Activated naive CD4-positive, alpha-beta T cell treated with anti-CD3 and anti-CD28 coated beads for 36 hours (primary cell): ENCODE measurements at regions of chr13 and their contacts with region 1.

Region 1: GRCh38 chr13:32581177-32581786 is 5.0 kb upstream of the PDS5B start:
- DNase-seq: no peak
- H3K4me3 Mint-ChIP-seq: no peak overlapping the region
- H3K27ac Mint-ChIP-seq: no peak overlapping the region
- H3K4me1 Mint-ChIP-seq: peaks cover 9% of the 10 kb centered on the region
- H3K27me3 Mint-ChIP-seq: no peaks in the 10 kb centered on the region

Region 2: GRCh38 chr13:32019612-32020233 is 561.6 kb before region 1 on chr13:
- CTCF ChIA-PET with region 1: interaction called, 3 read pairs
- intact Hi-C with region 1: loop called (anchors 2 kb)
- DNase-seq: peak; percentile 62
- H3K4me3 Mint-ChIP-seq: no peak overlapping the region
- H3K27ac Mint-ChIP-seq: no peak overlapping the region
- H3K4me1 Mint-ChIP-seq: no peaks in the 10 kb centered on the region
- H3K27me3 Mint-ChIP-seq: no peaks in the 10 kb centered on the region

Region 3: GRCh38 chr13:32246468-32246867 is 334.8 kb before region 1 on chr13:
- CTCF ChIA-PET with region 1: interaction called, 3 read pairs
- intact Hi-C with region 1: loop called (anchors 1 kb)
- DNase-seq: peak; percentile 63
- H3K4me3 Mint-ChIP-seq: no peak overlapping the region
- H3K27ac Mint-ChIP-seq: peak overlapping the region; percentile 22
- H3K4me1 Mint-ChIP-seq: no peaks in the 10 kb centered on the region
- H3K27me3 Mint-ChIP-seq: no peaks in the 10 kb centered on the region

Region 4: DNA sequence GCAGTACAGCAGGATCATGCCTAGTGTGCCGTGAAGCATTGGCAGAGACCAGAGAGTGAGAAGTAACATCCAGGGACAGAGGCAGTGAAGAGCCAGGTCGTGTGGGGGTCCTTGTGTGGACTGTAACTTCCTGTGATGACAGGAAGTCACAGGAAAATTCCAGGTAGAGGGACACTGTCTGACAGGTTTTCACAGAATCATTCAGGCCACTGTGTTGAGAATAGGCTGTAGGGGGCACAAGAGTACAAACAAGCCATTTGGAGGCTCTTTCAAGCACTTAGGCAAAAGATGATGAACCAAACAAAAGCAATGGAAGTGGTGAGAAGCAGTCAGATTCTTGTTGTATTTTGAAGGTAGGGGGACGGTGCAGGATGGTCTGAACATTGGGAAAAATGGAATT is 199.7 kb before region 1 on chr13:
- CTCF ChIA-PET with region 1: interaction called, 10 read pairs
- intact Hi-C with region 1: loop called (anchors 1 kb)
- DNase-seq: peak; percentile 10
- H3K4me3 Mint-ChIP-seq: no peak overlapping the region
- H3K27ac Mint-ChIP-seq: no peak overlapping the region
- H3K4me1 Mint-ChIP-seq: no peaks in the 10 kb centered on the region
- H3K27me3 Mint-ChIP-seq: no peaks in the 10 kb centered on the region